Motor neuron (in vitro differentiated cells): ENCODE measurements at regions of chr21 and their contacts with region 1.

Region 1: DNA sequence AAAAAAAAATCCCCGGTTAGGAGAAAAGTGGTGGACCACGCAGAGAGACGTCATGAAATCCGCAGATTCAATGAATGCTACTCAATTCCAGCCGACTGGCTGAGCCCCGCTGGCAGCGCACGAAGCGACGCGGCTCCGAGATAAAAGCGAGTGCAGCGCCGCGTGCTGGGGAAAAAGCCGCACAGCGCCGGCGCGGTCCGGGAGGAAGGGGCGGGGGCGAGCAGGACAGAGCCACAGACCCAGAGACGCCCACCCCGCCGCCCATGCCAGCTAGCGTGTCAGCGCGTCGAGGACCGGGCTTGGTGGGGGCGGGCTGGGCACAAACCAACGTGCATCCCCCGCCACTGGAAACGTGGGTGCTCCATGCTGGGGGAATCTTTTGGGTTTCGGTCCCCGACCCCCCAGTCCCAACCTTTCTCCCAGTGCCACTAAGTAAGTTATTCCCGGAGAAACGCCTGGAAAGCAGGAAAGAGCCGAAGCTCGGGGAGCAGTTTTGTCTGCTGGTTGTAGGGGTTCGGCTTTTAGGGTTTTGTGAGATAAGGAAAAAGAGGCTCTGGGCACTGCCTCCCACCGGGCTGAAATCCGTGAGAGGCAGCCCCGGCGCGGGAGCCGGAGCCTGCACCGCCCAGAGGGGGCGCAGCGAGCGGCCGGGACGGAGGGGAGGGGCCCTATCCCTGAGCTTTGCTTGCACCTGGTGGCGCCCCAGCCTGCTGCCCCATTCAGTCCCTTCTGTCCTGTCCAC is at the start of gene KCNJ6:
- ATAC-seq: peak; percentile 44 to 95 (median 91)
- H3K4me3 ChIP-seq: peak within 1 kb of the TSS; percentile 42 to 59 (median 50)
- H3K27ac ChIP-seq: no peak within 1 kb of the TSS
- H3K4me1 ChIP-seq: peaks cover 14% of the 10 kb centered on the region in 2 donors
- total RNA-seq, gene KCNJ6: 0.05 to 3.4 (median 0.61) TPM

Region 2: GRCh38 chr21:37700641-37701202 is 215.8 kb before region 1 on chr21:
- in situ Hi-C with region 1: loop called in 2 of 9 experiments (anchors 25 kb)
- ATAC-seq: peak; percentile 89 to 100 (median 96)
- H3K4me3 ChIP-seq: no peak overlapping the region
- H3K27ac ChIP-seq: no peak overlapping the region
- H3K4me1 ChIP-seq: no peaks in the 10 kb centered on the region

Region 3: GRCh38 chr21:37787456-37787855 is 129.0 kb before region 1 on chr21:
- in situ Hi-C with region 1: loop called in 1 of 9 experiments (anchors 25 kb)
- ATAC-seq: no peak
- H3K4me3 ChIP-seq: no peak overlapping the region
- H3K27ac ChIP-seq: no peak overlapping the region
- H3K4me1 ChIP-seq: no peaks in the 10 kb centered on the region

Region 4: GRCh38 chr21:39251326-39251725 is 1334.8 kb after region 1 on chr21:
- in situ Hi-C with region 1: no loop called
- ATAC-seq: no peak
- H3K4me3 ChIP-seq: no peak overlapping the region
- H3K27ac ChIP-seq: no peak overlapping the region
- H3K4me1 ChIP-seq: no peaks in the 10 kb centered on the region